H1 (cell line): ENCODE measurements at regions of chr2 and their contacts with region 1.

Region 1: DNA sequence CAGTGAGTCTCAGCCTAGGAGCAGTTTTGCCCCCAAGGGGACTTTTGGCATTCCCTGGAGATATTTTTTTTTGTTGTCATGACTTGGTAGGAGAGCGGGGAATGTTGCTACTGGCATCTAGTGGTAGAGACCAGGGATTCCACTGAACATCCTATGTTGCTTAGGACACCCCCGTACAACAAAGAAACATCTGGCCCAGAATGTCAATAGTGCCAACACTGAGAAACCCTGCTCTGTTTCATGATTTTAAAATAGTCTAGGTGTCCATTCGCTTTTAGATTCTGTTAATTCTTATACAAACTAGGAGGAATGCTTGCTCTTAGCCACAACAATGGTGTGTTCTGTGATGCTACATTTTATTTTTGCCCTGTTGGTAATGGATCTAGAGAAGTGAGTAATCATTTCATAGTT is 225.8 kb upstream of the SIX3 start:
- DNase-seq: peak in 1 of 2 experiments; percentile 47
- H3K4me3 ChIP-seq: no peak overlapping the region
- H3K27ac ChIP-seq: no peak overlapping the region
- H3K4me1 ChIP-seq: no peaks in the 10 kb centered on the region; a peak in 1 of 7 replicates
- H3K27me3 ChIP-seq: no peaks in the 10 kb centered on the region
- CTCF ChIP-seq: peak; percentile 31 to 82 (median 75)
- EP300 ChIP-seq: no peak
- POLR2A ChIP-seq: no peak
- RAD21 ChIP-seq: peak; percentile 94 to 96

Region 2: DNA sequence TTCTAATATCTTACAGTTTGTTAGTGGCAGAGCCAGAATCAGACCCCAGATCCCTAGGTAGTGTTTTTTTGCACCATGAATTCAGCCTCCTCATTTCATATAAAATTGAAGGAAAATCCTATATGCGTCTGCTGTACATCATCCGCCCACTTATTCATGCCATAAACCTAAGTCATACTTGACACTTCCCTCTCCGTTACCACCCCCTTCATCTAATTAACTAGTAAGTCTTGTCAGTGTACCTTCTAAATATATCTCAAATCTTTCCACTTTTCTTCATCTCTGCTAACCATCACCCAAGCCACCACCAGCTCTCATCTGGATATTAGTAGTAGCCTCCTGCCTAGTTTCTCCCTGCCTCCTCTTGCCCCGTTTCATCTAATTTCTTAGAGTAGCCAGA is 22.9 kb before region 1 on chr2:
- CTCF ChIA-PET with region 1: interaction called, 11 read pairs
- POLR2A ChIA-PET with region 1: no interaction called
- DNase-seq: no peak
- H3K4me3 ChIP-seq: no peak overlapping the region
- H3K27ac ChIP-seq: no peak overlapping the region
- H3K4me1 ChIP-seq: no peaks in the 10 kb centered on the region
- H3K27me3 ChIP-seq: no peaks in the 10 kb centered on the region
- CTCF ChIP-seq: no peak
- EP300 ChIP-seq: no peak
- POLR2A ChIP-seq: no peak
- RAD21 ChIP-seq: no peak